Left ventricle myocardium superior (tissue), 1 donor: ENCODE measurements at regions of chr12 and their contacts with region 1.

Region 1: DNA sequence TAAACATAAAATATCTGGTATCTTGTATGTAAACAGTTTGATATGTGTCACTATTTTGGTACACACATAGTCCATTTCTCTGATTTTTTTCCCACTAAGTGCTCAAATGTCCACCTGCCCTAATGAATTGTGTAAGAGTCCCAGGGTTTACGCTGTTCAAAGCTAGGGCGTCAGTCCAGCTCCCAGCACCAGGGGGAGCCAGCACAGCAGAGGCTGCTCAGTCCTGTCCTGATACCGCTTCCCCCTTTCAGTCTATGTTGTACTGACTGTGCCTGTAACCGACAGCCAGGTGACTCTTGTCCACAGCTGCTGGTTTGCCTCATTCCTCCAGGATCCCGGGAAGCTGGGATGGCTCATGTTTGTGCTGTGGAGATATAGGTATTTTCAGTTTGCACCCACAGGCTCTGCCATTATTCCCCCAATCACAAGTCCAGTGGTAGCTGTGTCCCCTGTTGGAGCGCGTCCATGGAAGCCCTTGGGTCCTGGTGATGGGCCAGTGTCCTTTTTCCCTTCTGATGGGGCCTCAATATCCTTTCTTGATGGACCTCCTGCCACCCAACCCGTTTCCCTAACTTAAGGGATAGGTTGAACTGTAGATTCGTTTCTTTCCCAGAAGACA is 242.0 kb downstream of the NEDD1 start:
- DNase-seq: peak; percentile 55
- ATAC-seq: peak; percentile 83

Region 2: GRCh38 chr12:98397316-98398105 is 1248.5 kb after region 1 on chr12:
- intact Hi-C with region 1: loop called (anchors 5 kb)
- DNase-seq: peak; percentile 85
- ATAC-seq: peak; percentile 99